Mammary epithelial cell (primary cell): ENCODE measurements at regions of chr10 and their contacts with region 1.

Region 1: GRCh38 chr10:15370856-15371701 is at the start of gene FAM171A1:
- DNase-seq: peak; percentile 56
- H3K4me3 ChIP-seq: peak within 1 kb of the TSS; percentile 65 to 87 (median 68)
- H3K27ac ChIP-seq: no peak within 1 kb of the TSS
- H3K4me1 ChIP-seq: peaks cover 4% of the 10 kb centered on the region
- H3K27me3 ChIP-seq: no peaks in the 10 kb centered on the region
- CTCF ChIP-seq: peak in 1 of 2 donors; percentile 17
- total RNA-seq, gene FAM171A1: 15.5 to 25.2 TPM

Region 2: GRCh38 chr10:15209827-15210509 is 161.1 kb before region 1 on chr10:
- CTCF ChIA-PET with region 1: no interaction called
- dilution Hi-C with region 1: no loop called
- in situ Hi-C with region 1: loop called in 1 of 2 experiments (anchors 25 kb)
- intact Hi-C with region 1: loop called (anchors 2 kb)
- DNase-seq: peak; percentile 34
- H3K4me3 ChIP-seq: no peak overlapping the region
- H3K27ac ChIP-seq: no peak overlapping the region
- H3K4me1 ChIP-seq: peaks cover 4% of the 10 kb centered on the region
- H3K27me3 ChIP-seq: no peaks in the 10 kb centered on the region
- CTCF ChIP-seq: peak; percentile 82 to 88

Region 3: DNA sequence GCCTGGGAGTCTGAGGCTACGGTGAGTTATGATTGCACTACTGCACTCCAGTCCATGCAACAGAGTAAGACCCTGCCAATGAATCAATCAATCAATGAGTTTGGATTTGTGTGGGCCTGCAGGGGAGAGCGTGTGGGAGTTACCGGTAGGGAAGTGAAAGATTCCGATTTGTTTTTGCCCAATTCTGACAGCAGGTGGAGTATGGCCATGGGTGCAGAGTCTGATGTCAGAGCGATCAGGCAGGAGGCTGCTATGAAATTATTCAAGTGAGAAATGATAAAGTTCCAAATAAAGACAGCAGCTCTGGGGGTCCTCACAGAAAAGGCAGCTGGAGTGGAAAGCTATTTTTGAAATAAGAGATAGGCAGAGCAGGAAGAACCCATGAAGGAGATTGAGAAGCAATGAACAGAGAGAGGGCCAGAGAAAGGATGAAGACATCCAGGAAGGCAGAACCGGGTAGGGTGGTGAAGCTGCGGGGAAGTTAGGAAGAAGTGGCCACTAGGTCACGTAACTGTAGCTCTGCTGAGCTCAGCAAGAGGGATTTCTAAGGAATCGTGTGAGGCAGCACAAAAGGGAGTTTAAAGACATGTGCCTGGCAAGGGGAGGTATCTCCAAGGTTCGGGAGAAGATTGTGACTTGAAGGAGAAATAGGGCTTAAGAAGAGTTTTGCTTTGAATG is 108.9 kb before region 1 on chr10:
- CTCF ChIA-PET with region 1: no interaction called
- dilution Hi-C with region 1: no loop called
- in situ Hi-C with region 1: no loop called
- intact Hi-C with region 1: loop called (anchors 2 kb)
- DNase-seq: no peak
- H3K4me3 ChIP-seq: no peak overlapping the region
- H3K27ac ChIP-seq: no peak overlapping the region
- H3K4me1 ChIP-seq: no peaks in the 10 kb centered on the region
- H3K27me3 ChIP-seq: no peaks in the 10 kb centered on the region
- CTCF ChIP-seq: peak; percentile 5 to 32

Region 4: GRCh38 chr10:15491856-15492642 is 121.0 kb after region 1 on chr10:
- CTCF ChIA-PET with region 1: no interaction called
- dilution Hi-C with region 1: no loop called
- in situ Hi-C with region 1: no loop called
- intact Hi-C with region 1: no loop called
- DNase-seq: no peak
- H3K4me3 ChIP-seq: no peak overlapping the region
- H3K27ac ChIP-seq: no peak overlapping the region
- H3K4me1 ChIP-seq: no peaks in the 10 kb centered on the region
- H3K27me3 ChIP-seq: no peaks in the 10 kb centered on the region
- CTCF ChIP-seq: no peak